ENCODE measurements at regions of chr2 and their contacts with region 1.

Region 1: DNA sequence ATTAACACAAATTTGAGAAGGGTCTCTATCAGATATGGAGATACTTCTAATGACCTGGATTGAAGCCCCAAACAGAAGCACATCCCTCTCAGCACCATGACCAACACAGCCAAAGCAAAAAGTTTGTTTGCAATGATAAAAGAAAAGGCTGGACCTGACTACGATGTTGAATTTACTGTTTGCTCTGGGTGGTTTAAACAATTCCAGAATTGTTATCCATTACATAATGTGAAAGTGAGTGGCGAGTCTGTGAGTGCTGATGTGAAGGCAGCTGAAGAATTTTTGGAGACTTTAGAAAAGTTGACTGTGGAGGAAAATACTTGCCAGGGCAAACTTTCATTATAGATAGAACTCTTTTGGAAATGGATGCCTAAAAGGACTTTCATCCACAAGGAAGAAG is 17.4 kb upstream of the DLX2 start:
- DNase-seq: no peak
- H3K4me3 ChIP-seq: no peak overlapping the region
- H3K27ac ChIP-seq: no peak overlapping the region
- H3K4me1 ChIP-seq: no peaks in the 10 kb centered on the region
- CTCF ChIP-seq: no peak

Region 2: DNA sequence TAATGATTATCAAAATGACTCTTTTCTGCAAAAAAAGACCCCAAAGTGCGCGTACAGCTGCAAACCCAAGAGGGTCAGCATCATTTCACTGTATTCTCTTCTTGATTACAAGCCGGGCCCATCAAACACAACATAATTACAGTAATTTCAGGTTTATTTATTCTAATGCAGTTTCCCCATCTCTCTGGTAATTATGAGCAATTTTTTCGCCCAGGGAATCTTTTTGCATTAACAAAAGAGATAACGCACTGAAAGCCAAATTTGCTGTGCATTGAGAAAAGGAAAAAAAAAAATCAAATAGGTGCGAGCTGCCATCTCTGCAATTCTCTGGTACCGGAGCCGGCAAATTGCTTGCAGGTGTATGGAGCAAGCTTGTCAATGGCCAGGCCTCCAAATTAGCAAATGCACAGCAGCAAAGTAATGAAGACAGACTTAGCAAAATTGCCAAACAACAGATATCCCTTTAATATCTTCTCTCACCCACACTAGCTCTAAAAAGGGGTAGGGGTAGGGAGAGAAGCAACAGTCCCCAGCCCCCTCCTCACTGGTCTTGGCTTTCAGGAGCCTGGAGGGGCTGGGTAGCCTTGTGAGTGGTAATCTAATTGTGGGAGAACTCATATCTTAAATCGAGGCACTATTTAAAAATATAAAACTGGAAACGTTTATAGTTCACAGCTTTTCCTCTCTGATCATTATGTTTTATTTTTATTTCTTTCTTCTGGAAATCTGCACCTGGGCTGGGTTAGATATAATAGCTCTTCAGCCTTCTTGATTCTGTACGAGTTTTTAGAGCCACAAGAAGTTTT is 28.2 kb before region 1 on chr2:
- CTCF ChIA-PET with region 1: no interaction called
- POLR2A ChIA-PET with region 1: no interaction called
- intact Hi-C with region 1: no loop called
- DNase-seq: no peak
- H3K4me3 ChIP-seq: no peak overlapping the region
- H3K27ac ChIP-seq: no peak overlapping the region
- H3K4me1 ChIP-seq: peaks cover 5% of the 10 kb centered on the region
- CTCF ChIP-seq: no peak

Region 3: GRCh38 chr2:172102391-172103278 is 17.5 kb before region 1 on chr2 and contains the start of gene DLX2:
- CTCF ChIA-PET with region 1: no interaction called
- POLR2A ChIA-PET with region 1: no interaction called
- intact Hi-C with region 1: no loop called
- DNase-seq: peak; percentile 93
- H3K4me3 ChIP-seq: peak within 1 kb of the TSS; percentile 68
- H3K27ac ChIP-seq: no peak within 1 kb of the TSS
- H3K4me1 ChIP-seq: no peaks in the 10 kb centered on the region
- CTCF ChIP-seq: 0 out of 2 replicates have a peak, but pooled peaks have one; percentile 20
- total RNA-seq, gene DLX2: 0.22 TPM in 1 of 2 replicates, not detected in the other

Region 4: GRCh38 chr2:172972005-172972619 is 852.0 kb after region 1 on chr2:
- CTCF ChIA-PET with region 1: no interaction called
- POLR2A ChIA-PET with region 1: no interaction called
- intact Hi-C with region 1: loop called (anchors 5 kb)
- DNase-seq: peak; percentile 55
- H3K4me3 ChIP-seq: no peak overlapping the region
- H3K27ac ChIP-seq: no peak overlapping the region
- H3K4me1 ChIP-seq: no peaks in the 10 kb centered on the region
- CTCF ChIP-seq: peak; percentile 88